Activated CD8-positive, alpha-beta memory T cell treated with anti-CD3 and anti-CD28 coated beads, Interleukin-2, amount 10 ng/mL, durations not matched to agents 7 days and 5 days (primary cell): ENCODE measurements at regions of chr2 and their contacts with region 1.

Region 1: DNA sequence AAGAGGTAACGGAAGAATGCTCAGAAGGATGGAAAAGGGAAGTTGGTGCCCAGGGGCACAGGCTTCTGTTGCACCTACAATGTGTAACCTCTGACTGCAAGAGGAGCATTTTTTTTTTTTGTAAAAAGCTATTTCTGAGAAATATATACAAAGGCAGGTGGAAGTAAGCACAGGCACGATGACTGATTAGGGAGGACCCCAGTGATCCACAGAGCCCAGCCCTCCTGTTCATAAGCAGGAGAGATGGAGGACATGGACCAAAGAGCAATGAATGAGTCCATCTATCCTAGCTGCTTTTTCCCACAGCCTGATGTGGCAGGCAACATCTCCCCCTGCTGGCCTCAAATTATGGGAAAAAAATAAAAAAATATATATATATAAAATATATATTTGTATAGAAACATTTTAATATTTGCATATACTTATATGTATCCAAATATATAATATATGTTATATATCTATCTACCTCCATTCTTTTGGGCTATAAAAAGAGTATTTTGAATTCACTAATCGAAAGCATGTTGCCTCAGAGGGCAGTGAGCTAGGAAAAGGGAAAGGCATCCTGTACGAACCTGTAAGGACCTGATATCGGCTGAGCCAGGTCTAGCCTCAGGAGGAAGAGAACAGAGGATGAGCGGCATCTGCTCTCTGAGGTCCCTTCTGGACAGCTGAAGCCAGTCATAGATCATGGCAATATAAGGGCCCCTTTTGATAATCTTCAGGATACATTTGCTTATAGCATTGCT is 166.0 kb upstream of the STK17B start:
- DNase-seq: no peak
- ATAC-seq: no peak
- H3K4me3 Mint-ChIP-seq: no peak overlapping the region
- H3K27ac Mint-ChIP-seq: no peak overlapping the region
- H3K4me1 Mint-ChIP-seq: peaks cover 9% of the 10 kb centered on the region
- H3K27me3 Mint-ChIP-seq: peaks cover 6% of the 10 kb centered on the region

Region 2: DNA sequence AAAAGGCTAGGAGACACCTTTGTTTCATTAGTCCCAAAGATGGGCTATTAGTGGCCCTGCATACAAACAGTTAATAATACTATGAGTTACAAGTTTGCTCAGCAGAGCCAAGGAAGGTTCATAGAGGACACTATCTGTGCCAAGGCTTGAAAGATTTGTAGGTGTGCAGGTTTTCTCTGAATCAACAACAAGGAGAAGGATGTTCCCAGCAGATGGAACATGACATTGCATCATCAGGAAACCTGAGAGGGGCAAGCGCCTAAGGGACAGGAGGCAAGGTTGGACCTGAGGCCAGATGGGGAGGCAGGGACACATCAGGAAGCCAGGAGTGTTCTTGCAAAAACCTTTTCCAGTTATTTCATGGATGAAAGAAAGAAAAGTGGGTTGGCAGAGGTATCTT is 130.6 kb before region 1 on chr2:
- CTCF ChIA-PET with region 1: no interaction called
- DNase-seq: no peak
- ATAC-seq: no peak
- H3K4me3 Mint-ChIP-seq: no peak overlapping the region
- H3K27ac Mint-ChIP-seq: no peak overlapping the region
- H3K4me1 Mint-ChIP-seq: peaks cover 55% of the 10 kb centered on the region
- H3K27me3 Mint-ChIP-seq: no peaks in the 10 kb centered on the region

Region 3: DNA sequence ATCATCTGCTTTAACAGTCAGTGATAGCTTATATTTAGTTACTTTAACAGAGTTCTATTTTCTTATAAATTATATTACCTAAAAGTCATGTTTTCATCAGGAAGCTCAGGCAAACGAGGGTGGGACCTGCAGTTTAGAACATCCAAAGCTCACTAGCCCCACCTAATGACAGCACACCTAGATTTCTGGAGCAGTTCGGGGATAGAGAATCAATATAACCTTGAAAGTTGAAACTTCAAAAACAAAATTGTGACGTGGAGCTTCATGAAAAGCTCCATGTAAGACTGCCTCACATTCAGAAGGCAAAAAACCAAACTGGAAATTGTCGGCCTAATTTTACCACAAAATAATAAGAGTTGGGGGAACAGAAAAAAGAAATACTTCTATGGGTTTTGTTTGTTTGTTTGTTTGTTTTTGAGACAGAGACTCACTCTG is 116.2 kb after region 1 on chr2:
- CTCF ChIA-PET with region 1: interaction called, 16 read pairs
- DNase-seq: peak; percentile 60
- ATAC-seq: peak; percentile 47
- H3K4me3 Mint-ChIP-seq: no peak overlapping the region
- H3K27ac Mint-ChIP-seq: no peak overlapping the region
- H3K4me1 Mint-ChIP-seq: peaks cover 4% of the 10 kb centered on the region
- H3K27me3 Mint-ChIP-seq: peaks cover 39% of the 10 kb centered on the region